ENCODE measurements at regions of chr18 and their contacts with region 1.

Region 1: DNA sequence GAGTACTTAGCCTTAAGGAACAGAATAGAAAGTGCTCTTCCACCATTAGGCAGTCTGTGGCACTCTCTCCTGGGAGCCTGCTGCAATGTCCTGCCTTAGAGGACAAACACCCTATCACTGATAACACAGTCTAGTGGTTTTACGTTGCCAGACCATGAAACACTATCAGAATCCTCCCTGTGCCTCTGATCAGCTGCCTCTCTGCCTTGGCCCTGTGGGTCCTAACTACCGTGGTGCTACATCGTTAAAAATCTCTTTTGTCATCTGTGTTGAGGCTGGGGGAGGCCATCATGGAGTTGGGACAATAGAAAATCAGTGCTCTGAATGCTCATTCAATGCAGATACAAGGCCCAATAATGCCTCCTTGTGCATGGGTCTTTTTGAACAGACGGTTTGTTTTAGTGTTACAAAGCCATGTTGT is 11.9 kb upstream of the APCDD1 start:
- DNase-seq: peak in 7 of 10 donors; percentile 11 to 74 (median 52)
- H3K4me3 ChIP-seq: peak overlapping the region in 16 of 59 donors; percentile 1 to 42 (median 12)
- H3K27ac ChIP-seq: peak overlapping the region; percentile 34 to 96 (median 83)
- H3K27me3 ChIP-seq: no peaks in the 10 kb centered on the region
- CTCF ChIP-seq: peak in 52 of 56 donors; percentile 17 to 76 (median 51)

Region 2: DNA sequence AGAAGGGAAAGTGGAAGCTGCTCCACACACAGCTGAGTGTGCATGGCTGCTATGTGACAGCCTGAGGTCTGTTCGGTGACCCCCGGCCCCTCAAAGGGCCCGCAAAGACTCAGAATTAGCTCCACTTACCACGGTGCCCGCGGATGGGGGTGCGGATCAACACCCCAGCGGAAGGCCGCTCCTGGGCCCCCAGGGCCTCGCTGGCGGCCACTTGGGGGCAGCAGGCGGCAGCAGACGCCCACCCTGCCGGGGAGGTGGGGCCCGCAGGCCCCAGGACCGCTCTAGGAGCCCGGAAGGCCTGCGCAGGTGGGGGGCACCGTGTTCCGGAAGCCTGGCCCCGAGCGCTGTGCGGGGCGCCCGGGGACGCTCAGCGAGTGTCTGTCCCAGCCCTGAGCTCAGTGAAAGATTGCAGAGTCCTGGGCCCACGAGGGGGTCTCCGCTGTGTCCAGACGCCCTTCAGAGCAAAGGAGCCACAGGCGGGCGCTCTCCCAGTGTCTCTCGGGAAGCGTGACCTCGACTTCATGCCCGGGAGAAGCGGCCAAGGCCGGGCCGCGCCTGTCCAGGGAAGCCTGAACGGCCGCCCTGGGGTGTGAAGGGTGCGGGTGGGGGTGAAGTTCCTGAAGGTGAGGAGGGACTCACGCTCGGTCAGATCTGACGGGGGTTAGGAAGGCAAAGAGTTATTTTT is 410.1 kb before region 1 on chr18:
- intact Hi-C with region 1: loop called in 1 of 2 experiments (anchors 10 kb)
- DNase-seq: peak in 1 of 10 donors; percentile 67
- H3K4me3 ChIP-seq: peak overlapping the region in 58 of 59 donors; percentile 17 to 63 (median 42)
- H3K27ac ChIP-seq: peak overlapping the region in 32 of 59 donors; percentile 4 to 79 (median 43)
- H3K27me3 ChIP-seq: peaks cover 0 to 7% (median 0%) of the 10 kb centered on the region in 45 donors
- CTCF ChIP-seq: peak; percentile 30 to 82 (median 62)

Region 3: DNA sequence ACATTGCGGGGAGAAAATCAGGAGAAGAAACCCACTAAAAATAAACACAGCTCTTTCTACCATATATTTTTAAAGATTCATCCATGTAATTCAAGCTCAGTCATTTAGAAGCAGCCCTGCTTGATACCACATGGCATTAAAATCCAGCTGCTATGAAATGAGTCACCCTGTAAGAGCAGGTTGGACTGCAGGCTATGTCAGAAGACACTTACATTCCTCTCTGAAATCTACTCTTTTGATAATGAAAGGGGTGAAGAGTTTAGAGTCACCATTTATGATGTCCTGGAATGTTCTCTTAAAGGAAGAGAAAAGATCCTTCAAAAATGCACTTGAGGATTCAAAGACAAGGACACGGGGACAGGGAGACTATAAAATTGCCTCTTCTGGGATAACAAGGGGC is 88.8 kb before region 1 on chr18:
- intact Hi-C with region 1: loop called in 1 of 2 experiments (anchors 5 kb)
- DNase-seq: no peak
- H3K4me3 ChIP-seq: peak overlapping the region in 1 of 59 donors; percentile 8
- H3K27ac ChIP-seq: peak overlapping the region in 52 of 59 donors; percentile 13 to 92 (median 74)
- H3K27me3 ChIP-seq: no peaks in the 10 kb centered on the region
- CTCF ChIP-seq: no peak

Region 4: GRCh38 chr18:10401521-10401920 is 41.0 kb before region 1 on chr18:
- intact Hi-C with region 1: loop called (anchors 5 kb)
- DNase-seq: no peak
- H3K4me3 ChIP-seq: peak overlapping the region in 2 of 59 donors; percentile 9 to 32
- H3K27ac ChIP-seq: no peak overlapping the region
- H3K27me3 ChIP-seq: peaks cover 0 to 4% (median 0%) of the 10 kb centered on the region in 45 donors
- CTCF ChIP-seq: no peak

Region 5: DNA sequence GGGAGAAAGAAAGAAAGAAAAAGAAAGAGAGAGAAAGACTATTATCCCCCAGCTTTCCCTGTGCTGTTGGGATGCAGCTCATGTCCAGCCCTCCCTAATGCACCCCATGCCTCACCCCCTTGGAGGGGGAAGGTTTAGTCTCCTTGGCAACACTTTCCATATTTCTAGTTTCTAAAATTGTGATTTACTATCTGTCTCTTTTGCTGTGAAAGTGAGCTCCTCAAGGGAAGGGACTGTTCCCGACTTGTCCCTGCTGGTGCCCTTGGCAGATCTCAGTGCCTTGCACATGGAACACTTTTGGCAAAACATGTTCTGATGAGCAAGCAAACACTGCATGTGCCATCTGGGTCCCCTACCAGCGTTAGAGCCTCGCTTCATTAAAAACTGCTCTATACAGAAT is 71.5 kb after region 1 on chr18:
- intact Hi-C with region 1: loop called (anchors 2 to 5 kb)
- DNase-seq: peak in 2 of 10 donors; percentile 50 to 55
- H3K4me3 ChIP-seq: no peak overlapping the region
- H3K27ac ChIP-seq: peak overlapping the region in 41 of 59 donors; percentile 1 to 72 (median 47)
- H3K27me3 ChIP-seq: peaks cover 0 to 2% (median 0%) of the 10 kb centered on the region in 45 donors
- CTCF ChIP-seq: no peak

Region 6: DNA sequence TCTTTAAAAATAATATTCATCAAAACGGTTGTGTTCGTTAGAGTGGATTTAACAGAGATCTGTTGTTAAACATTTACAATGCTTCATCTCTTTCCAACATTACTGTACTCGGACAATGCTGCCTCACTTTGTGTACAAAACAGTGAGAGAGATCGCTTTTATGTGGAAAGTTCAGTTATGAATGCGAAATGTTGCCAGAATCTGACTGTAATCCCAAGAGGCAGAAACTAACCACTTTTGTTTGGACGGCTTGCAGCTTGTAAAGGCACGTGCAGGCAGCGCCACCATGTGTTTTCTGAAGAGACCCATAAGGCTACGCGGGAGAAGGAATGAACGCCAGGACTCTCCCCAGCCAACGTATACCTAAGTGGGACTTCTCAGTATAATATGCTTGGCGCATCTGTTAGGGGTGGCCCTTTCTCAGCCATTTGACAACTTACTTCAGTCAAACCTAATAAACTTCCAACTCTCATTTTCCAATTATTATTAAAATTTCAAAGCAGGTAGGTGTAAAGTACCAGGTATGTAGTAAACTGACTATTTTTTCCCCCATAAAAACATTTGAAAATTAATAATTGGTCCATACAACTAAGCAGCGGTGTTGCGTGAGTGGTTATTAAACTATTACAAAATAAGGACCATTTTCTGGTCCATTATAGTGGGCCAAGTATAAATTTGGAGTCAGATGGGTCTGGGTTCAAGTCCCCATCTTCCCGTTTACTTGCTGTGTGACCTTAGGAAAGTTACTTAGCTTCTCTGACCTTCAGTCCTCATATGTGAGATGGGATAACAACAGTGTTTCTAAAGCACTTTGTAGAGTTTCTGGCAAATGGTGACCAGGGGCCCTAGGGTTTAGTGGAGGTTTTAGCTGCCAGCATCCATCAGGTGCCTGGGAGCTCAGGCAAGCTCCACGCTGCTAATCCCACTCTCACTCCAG is 77.7 kb after region 1 on chr18:
- intact Hi-C with region 1: loop called (anchors 2 to 5 kb)
- DNase-seq: peak; percentile 47 to 90 (median 82)
- H3K4me3 ChIP-seq: peak overlapping the region in 21 of 59 donors; percentile 1 to 44 (median 26)
- H3K27ac ChIP-seq: peak overlapping the region in 50 of 59 donors; percentile 3 to 91 (median 78)
- H3K27me3 ChIP-seq: no peaks in the 10 kb centered on the region
- CTCF ChIP-seq: peak; percentile 57 to 97 (median 88)